Cardiac septum (tissue), 1 donor: ENCODE measurements at regions of chr7 and their contacts with region 1.

Region 1: DNA sequence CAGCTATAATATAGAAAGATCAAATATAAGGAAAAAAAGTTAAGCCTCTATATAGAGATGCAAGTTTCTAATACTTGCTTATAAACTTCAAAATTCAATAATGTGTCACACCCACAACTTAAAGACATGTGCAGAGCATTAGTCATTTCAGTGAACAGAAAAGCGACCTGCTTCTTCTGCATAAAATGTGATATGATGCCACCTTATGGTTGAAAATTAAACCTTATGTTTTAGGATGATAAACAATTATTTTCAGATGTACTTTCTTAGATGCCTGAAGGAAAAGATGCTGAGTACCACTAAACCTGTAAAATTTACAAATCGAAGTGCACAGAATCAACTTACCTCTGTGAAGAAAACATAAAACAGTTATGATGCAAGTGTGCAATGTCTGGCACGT is 96.0 kb downstream of the MTERF1 start:
- DNase-seq: no peak

Region 2: DNA sequence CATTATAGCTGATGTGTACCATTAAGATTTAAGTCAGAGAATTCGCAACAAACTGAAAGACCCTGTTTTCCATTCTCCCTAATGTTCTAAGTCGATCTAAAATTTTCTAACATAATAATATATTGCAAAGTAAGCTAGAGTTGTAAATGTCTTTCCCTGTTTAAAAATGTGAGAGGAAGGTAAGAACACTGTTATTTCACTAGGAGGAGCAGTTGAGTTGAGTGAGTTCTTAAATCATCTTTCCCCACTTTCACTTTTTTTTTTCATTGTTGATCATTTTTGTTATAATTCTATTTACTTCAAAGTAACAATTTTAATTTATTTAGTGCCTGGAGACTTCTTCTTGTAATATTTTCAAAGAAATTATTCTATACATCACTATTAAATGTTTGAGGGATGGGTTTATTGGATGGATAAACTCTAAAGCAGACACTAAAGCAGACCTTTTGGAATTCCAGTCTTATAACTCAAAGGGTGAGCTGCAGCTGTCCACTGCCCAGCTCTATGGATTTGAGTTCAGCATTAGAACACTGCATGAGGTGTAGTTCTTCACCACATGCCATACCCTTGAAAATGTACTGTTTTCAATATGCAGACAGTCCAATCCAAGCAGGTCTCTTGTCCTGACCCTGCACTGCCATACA is 701.5 kb before region 1 on chr7:
- intact Hi-C with region 1: loop called (anchors 5 kb)
- DNase-seq: no peak

Region 3: DNA sequence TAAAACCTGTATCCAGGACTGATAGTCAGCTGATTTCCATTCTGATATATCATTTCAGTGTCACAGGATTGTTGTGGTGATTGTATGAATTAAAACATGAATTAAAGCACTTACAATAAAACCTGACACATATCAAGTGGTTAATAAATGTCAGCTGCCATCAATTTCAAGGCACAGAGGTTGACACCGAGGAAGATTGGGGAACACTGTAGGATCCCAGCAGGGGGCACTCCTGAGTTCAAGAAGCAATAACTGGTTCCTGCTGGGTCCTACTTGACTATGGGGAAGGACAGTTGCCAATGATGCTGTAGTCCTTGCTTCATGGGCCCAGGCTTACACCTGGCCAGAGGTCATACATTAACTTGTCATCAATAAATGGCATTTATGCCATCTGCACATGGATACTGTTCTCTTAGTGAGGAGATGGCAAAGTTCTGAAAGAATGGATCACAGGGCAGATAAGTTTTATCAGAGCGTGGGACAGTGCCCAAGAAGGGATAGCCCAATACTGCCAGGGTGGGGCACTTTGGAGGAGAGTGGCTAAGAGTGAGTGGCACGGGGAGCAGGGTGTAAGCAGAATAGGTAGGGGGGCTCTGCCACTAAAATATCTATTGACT is 496.1 kb before region 1 on chr7:
- intact Hi-C with region 1: loop called (anchors 5 kb)
- DNase-seq: peak; percentile 78

Region 4: GRCh38 chr7:91636129-91636724 is 148.2 kb before region 1 on chr7:
- intact Hi-C with region 1: loop called (anchors 10 kb)
- DNase-seq: no peak

Region 5: DNA sequence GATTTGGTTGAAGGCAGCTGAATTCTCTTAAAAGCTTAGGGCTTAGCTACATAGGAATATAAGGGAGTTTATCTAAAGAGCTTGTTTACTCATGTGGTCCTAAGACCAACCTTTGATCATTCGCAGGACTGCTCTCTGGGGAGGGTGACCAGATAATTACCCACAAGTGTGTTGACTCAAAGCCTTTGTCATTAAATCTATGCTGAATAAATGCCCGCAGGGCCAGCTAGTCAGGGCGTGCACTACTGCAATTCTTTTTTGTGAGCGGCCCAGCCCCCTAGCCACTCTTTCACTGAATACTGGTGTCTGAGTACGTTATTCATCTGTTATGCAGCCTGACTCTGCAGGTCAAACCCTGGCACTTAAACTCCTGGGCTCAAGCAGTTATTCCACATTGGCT is 225.8 kb after region 1 on chr7:
- intact Hi-C with region 1: no loop called
- DNase-seq: no peak